ENCODE measurements at regions of chr4 and their contacts with region 1.

Region 1: DNA sequence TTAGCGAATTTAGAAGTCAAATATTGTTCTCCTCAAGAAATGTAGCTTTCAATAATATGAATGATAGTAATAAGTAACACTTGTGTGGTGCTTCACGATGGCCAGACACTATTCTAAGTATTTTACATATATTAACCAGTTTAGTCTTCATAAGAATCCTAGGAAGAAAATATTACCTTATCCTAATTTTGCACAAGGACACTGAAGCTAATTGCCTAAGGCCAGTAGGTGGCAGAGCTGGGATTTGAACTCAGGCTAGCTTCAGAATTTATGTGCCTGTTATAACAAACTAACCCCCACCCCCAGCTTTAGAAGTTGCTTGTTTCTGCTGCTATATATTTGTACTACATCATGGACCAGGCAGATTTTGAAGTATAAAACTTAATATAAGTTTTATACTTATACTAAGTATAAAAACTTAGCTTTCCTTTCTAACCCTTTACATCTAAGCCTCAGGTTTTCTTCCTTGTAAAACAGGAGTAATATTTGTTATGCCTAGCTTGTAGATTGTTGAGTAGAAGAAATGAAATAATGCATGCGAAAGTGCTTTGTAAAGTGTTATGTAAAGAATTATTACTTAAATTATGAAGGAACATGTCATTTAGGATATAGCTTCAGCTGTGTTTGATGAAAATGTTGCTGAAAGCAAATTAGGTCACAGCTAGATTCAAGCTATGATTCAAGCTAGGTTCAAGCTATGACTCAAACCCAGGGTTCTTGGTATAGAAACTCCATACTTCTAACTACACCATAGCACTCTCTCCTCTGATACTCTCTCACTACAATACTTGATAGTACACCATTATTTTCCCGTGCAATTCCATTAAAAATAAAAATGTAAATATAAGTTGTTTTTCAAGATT is 4.2 kb upstream of the CDS1 start:
- DNase-seq: no peak
- H3K4me3 ChIP-seq: no peak overlapping the region
- H3K27ac ChIP-seq: no peak overlapping the region
- H3K4me1 ChIP-seq: peaks cover 15% of the 10 kb centered on the region
- H3K27me3 ChIP-seq: no peaks in the 10 kb centered on the region
- CTCF ChIP-seq: no peak
- POLR2A ChIP-seq: no peak

Region 2: DNA sequence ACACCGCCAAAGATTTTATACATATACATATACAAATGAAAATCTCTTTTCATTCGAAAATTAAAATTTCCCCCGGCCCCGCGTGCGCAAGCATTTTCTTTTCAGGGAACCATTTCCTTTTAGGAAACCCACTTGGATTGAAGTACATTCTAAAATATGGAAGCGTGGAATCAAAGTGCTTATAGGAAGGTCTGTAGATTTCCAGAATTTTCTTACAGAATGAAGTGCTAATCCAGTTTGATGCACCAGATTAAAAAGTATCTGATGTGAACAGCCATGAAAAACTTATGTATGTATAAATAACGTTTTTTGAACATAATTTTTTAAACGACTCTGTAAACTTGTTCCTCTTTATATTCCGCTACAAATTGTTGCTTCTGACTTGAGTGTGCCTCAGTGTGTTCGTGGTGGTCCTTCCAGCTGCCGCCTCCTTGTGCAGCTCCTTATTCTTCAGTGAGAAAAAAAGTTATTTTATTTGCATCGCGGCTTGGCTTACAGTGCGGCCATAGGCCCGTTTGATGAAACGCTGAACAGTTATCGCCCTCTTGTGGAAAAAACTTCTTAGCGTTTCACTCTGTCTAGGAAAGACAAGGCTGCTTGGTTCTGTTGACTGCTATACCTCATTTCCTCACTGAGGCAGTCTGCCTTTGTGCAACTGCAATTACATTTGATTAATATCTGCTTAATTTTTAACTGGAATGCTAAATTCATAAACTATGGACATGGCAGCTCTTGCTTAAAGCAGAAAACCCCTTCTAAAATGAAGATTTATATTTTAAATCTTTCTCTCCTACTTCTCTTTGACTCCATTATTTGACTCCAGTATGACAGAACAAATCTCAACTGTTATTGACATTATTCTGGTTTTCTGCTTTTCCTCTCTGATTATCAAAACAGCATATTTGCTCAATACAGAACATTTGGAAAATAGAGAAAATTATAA is 75.0 kb before region 1 on chr4:
- intact Hi-C with region 1: no loop called
- DNase-seq: no peak
- H3K4me3 ChIP-seq: no peak overlapping the region
- H3K27ac ChIP-seq: no peak overlapping the region
- H3K4me1 ChIP-seq: peaks cover 12% of the 10 kb centered on the region
- H3K27me3 ChIP-seq: peaks cover 38% of the 10 kb centered on the region
- CTCF ChIP-seq: peak in 1 of 3 experiments; percentile 25
- POLR2A ChIP-seq: no peak

Region 3: DNA sequence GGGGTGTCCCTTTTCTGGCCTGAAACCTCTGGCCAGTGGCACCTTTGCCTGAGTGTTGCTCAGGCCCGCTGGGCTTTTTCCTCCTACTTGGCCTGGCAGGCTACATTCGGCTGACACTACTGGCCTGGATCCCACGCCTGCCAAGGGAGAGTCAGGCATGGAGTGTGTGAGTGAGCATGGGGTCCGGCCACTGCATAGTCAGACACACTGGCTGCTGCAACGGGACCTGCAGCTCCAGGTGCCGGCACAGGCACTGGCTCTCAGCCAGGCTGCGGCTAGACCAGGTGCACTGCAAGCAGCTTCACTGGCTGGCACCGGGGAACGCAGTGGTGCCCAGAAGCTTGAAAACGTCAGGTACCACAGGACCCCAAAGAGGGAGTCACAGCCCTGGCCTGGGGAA is 1331.1 kb after region 1 on chr4:
- intact Hi-C with region 1: loop called (anchors 5 kb)
- DNase-seq: no peak
- H3K4me3 ChIP-seq: no peak overlapping the region
- H3K27ac ChIP-seq: no peak overlapping the region
- H3K4me1 ChIP-seq: no peaks in the 10 kb centered on the region
- H3K27me3 ChIP-seq: no peaks in the 10 kb centered on the region
- CTCF ChIP-seq: no peak
- POLR2A ChIP-seq: no peak

Measured in vagina (tissue), 2 donors.